Activated CD8-positive, alpha-beta T cell treated with anti-CD3 and anti-CD28 coated beads for 36 hours (primary cell): ENCODE measurements at regions of chr5 and their contacts with region 1.

Region 1: GRCh38 chr5:93800988-93801811 is 59.8 kb upstream of the POU5F2 start:
- DNase-seq: peak; percentile 19
- ATAC-seq: no peak
- H3K4me3 Mint-ChIP-seq: no peak overlapping the region
- H3K27ac Mint-ChIP-seq: no peak overlapping the region
- H3K4me1 Mint-ChIP-seq: peaks cover 3% of the 10 kb centered on the region
- H3K27me3 Mint-ChIP-seq: no peaks in the 10 kb centered on the region
- CTCF ChIP-seq: peak; percentile 82

Region 2: DNA sequence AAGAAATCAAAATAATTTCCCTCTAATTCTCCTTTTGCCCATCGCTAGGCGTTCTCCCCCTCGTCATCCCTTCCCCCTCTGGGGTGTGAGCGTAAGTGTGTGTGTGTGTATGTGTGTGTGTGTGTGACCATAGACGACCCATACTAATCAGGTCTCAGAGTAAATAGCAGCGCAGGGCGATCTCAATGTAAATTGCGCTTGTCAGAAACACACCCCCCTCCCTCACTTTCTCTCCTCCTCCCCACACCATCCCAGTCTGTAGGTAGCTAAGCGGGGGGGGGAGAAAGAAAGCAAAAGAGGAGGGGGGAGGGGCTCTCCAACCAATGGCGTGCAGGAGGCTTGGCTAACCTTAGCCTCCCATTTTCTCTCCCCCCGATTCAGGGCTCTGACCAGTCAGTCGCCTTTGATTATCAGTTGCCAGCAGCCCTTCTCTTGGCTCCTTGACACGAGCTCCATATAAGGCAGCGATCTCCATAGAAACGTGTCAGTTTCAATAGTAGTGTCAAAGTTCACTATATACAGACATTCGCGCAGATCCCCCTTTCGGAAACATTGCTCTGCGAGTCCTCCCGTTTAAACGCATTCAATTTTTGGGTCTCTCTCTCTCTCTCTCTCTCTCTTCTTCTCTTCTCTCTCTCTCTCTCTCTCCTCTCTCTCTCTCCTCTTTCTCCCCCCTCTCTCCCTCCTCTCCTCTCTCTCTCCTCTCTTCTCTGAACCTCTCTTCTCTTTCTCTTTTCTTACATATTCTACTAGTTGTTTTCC is 218.3 kb before region 1 on chr5 and contains the start of gene NR2F1:
- CTCF ChIA-PET with region 1: interaction called, 15 read pairs
- POLR2A ChIA-PET with region 1: no interaction called
- intact Hi-C with region 1: loop called (anchors 2 kb)
- DNase-seq: no peak
- ATAC-seq: peak; percentile 38
- H3K4me3 Mint-ChIP-seq: no peak within 1 kb of the TSS
- H3K27ac Mint-ChIP-seq: no peak within 1 kb of the TSS
- H3K4me1 Mint-ChIP-seq: peaks cover 30% of the 10 kb centered on the region
- H3K27me3 Mint-ChIP-seq: peaks cover 49% of the 10 kb centered on the region
- CTCF ChIP-seq: no peak
- total RNA-seq, gene NR2F1: not detected

Region 3: DNA sequence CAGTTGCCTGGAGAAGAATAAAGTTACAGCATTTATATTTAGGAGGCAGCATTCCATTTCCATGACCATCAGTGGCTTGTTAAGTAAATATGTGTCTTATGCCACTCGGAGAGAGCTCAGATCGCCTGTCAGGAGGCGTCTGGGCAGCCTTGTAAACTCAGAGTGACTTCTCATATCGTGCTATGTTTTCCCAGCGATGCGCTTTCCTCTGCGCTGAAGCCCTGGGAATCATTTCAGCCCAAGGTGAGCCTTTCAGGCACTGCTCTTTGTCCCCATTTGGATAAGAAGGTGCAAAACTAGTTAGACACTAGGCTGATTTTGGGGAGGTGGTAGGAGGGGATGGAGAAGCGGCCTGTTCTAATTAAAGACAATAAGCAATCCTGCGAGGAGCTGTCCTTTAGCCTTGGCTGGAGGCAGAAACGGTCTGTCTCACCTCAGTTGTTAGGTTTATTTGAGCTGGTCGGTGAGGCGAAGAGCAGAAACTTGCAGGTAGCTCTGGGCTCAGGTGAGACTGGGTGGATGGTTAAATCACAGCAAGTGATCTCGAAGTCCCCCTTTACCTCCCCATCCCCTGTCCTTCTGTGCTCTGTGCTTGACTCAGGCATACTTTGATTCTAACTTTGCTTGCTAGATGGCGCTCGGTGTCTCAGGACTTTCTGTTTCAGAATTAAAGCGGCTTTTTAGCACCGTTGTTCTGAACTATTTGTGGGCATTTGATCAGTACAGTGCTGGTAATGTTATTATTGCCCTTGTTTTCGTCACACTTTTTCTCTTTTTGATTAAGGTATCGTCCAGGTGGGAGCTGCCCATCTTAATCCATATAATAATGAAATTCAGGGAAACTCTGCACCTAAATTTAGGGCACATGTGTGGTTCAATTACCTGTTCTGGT is 193.6 kb before region 1 on chr5:
- CTCF ChIA-PET with region 1: interaction called, 28 read pairs
- POLR2A ChIA-PET with region 1: no interaction called
- intact Hi-C with region 1: loop called (anchors 5 kb)
- DNase-seq: peak; percentile 59
- ATAC-seq: peak; percentile 81
- H3K4me3 Mint-ChIP-seq: no peak overlapping the region
- H3K27ac Mint-ChIP-seq: no peak overlapping the region
- H3K4me1 Mint-ChIP-seq: peaks cover 15% of the 10 kb centered on the region
- H3K27me3 Mint-ChIP-seq: peaks cover 77% of the 10 kb centered on the region
- CTCF ChIP-seq: peak; percentile 45

Region 4: DNA sequence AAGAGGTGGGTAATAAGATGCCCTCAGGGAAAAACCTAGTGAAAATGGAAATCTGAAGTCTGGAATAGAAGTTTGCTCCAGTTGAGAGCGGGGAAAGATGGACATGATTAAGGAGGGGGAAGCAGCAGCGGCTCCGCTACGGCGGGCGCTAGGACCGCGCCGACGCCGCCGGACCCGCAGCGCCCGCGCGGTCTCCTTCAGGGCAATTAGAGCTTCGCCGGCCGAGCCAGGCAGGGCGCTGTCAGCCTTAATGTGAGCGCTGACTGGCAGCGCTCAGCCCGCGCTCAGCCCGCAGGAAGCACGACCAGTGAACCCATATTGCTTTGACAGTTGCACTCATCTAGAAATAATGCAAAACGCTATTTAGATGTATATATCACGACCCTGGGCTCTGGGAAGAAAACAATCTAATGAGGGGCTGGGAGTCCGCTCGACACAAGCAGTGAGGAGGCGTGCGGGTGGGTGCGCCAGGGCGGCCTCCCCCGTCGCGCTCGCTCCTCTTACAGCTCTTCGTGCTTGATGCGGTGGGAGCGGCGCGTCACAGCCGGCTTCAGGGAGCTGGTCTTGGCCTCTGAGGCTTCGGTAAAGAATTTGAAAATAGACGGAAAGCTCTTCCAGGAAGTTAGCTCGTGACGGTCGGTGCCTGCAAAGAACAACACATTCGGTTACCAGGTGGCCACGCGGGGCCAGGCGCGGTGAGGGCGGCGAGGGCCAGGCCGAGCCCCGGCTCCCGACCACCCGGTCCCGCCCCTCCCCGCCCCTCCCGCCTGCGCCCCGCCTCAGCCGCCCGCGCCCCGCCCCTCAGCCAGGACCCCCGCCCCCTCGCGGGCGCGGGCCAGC is 180.5 kb before region 1 on chr5:
- CTCF ChIA-PET with region 1: interaction called, 23 read pairs
- POLR2A ChIA-PET with region 1: no interaction called
- intact Hi-C with region 1: no loop called
- DNase-seq: peak; percentile 75
- ATAC-seq: peak; percentile 90
- H3K4me3 Mint-ChIP-seq: peak overlapping the region; percentile 94
- H3K27ac Mint-ChIP-seq: peak overlapping the region; percentile 77
- H3K4me1 Mint-ChIP-seq: peaks cover 30% of the 10 kb centered on the region
- H3K27me3 Mint-ChIP-seq: peaks cover 12% of the 10 kb centered on the region
- CTCF ChIP-seq: no peak

Region 5: GRCh38 chr5:93705896-93706295 is 95.3 kb before region 1 on chr5:
- CTCF ChIA-PET with region 1: no interaction called
- POLR2A ChIA-PET with region 1: no interaction called
- intact Hi-C with region 1: no loop called
- DNase-seq: no peak
- ATAC-seq: no peak
- H3K4me3 Mint-ChIP-seq: no peak overlapping the region
- H3K27ac Mint-ChIP-seq: no peak overlapping the region
- H3K4me1 Mint-ChIP-seq: peaks cover 5% of the 10 kb centered on the region
- H3K27me3 Mint-ChIP-seq: no peaks in the 10 kb centered on the region
- CTCF ChIP-seq: no peak

Region 6: DNA sequence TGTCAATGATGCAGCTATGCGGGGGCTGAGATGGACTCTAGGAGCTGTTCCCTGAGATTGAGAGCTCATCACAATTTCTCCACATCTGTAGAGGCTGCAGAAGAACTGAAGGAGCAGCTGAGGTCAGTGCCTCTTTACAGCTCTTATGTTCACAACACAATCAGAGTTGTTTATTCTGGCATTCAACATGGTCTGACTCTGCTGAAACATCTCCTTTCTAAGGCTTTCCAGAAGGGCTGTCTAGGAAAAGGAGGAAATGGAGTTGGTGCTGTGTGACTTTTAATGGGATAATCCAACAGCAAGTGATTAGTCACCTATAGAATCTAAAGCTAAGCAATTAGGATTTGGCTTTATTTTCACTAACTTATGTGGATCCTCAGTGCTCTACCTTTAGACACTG is 65.8 kb before region 1 on chr5:
- CTCF ChIA-PET with region 1: no interaction called
- POLR2A ChIA-PET with region 1: no interaction called
- intact Hi-C with region 1: no loop called
- DNase-seq: no peak
- ATAC-seq: no peak
- H3K4me3 Mint-ChIP-seq: no peak overlapping the region
- H3K27ac Mint-ChIP-seq: no peak overlapping the region
- H3K4me1 Mint-ChIP-seq: no peaks in the 10 kb centered on the region
- H3K27me3 Mint-ChIP-seq: no peaks in the 10 kb centered on the region
- CTCF ChIP-seq: no peak

Region 7: DNA sequence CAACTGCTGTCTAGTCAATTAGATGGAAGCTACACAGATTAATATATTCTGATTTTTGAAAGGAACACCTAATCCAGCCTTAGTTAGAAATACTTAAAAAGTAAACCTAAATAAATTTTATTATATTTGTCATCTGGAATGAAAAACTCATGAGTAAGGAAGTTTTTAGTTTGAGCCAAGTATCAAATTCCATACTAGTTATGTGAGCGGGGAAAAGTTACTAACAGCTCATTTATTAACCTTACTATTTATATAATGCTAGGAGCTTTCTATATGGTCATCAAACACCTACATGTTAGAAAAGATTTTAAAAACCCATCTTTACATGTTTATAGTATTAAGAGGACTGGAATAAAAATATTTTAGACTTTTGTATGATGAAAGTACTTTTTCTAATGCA is 18.2 kb before region 1 on chr5:
- CTCF ChIA-PET with region 1: interaction called, 22 read pairs
- POLR2A ChIA-PET with region 1: no interaction called
- intact Hi-C with region 1: no loop called
- DNase-seq: no peak
- ATAC-seq: no peak
- H3K4me3 Mint-ChIP-seq: no peak overlapping the region
- H3K27ac Mint-ChIP-seq: no peak overlapping the region
- H3K4me1 Mint-ChIP-seq: no peaks in the 10 kb centered on the region
- H3K27me3 Mint-ChIP-seq: no peaks in the 10 kb centered on the region
- CTCF ChIP-seq: no peak

Region 8: GRCh38 chr5:93819666-93820065 is 18.5 kb after region 1 on chr5:
- CTCF ChIA-PET with region 1: interaction called, 10 read pairs
- POLR2A ChIA-PET with region 1: no interaction called
- intact Hi-C with region 1: no loop called
- DNase-seq: no peak
- ATAC-seq: no peak
- H3K4me3 Mint-ChIP-seq: no peak overlapping the region
- H3K27ac Mint-ChIP-seq: no peak overlapping the region
- H3K4me1 Mint-ChIP-seq: no peaks in the 10 kb centered on the region
- H3K27me3 Mint-ChIP-seq: no peaks in the 10 kb centered on the region
- CTCF ChIP-seq: no peak

Region 9: GRCh38 chr5:93995126-93995621 is 194.0 kb after region 1 on chr5:
- CTCF ChIA-PET with region 1: no interaction called
- POLR2A ChIA-PET with region 1: no interaction called
- intact Hi-C with region 1: no loop called
- DNase-seq: no peak
- ATAC-seq: peak; percentile 49
- H3K4me3 Mint-ChIP-seq: no peak overlapping the region
- H3K27ac Mint-ChIP-seq: no peak overlapping the region
- H3K4me1 Mint-ChIP-seq: peaks cover 22% of the 10 kb centered on the region
- H3K27me3 Mint-ChIP-seq: no peaks in the 10 kb centered on the region
- CTCF ChIP-seq: no peak